GM12878 (cell line): ENCODE measurements at regions of chr1 and their contacts with region 1.

Region 1: DNA sequence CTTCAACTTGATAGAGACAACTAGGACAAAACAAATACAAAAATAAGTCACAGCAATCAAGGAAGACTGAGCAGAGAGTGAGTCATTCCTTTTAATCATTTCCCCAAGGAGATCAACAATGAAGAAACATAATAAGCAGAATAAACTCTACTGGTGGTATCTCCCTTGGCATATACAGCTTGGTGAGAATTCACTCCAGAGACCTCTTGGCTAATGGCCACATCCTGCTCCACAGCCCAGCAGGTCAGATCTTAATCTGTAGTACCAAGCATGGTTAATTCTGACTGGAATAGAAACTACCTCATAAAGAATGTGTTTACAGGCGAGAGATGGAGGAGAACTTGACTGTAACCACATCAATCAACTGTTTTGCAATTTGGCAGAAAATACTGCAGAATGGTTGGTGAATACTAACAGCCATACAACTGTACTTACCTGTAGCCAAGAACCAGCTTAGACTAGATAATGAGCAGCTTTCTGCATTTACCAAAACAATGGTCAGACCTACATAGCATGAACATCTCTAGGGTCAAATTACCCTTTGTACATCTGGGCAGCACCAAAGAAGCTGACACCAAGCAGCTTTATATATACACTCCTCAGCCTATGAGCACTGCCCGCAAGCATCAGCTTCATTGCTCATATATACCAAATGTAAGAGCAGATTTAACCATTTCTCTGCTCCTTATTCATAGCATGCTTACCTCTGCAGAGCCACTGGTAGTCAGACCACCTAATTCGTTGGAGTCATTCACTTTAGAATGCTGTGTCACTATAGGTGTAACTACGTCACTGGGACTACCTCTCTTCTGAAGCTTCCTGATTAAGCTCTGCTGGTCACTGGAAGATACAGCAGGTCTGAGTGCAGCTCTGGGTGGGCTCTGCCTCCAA is 51.0 kb downstream of the KIAA0319L start:
- DNase-seq: peak; percentile 95
- ATAC-seq: peak; percentile 84
- H3K4me3 ChIP-seq: peak overlapping the region; percentile 68; the same call in 1 of the 2 replicates
- H3K27ac ChIP-seq: peak overlapping the region; percentile 94
- H3K4me1 ChIP-seq: peaks cover 40% of the 10 kb centered on the region
- H3K27me3 ChIP-seq: no peaks in the 10 kb centered on the region
- CTCF ChIP-seq: no peak; a peak in 2 of 6 replicates
- EP300 ChIP-seq: peak in 1 of 2 experiments; percentile 62; a peak in 3 of 4 replicates
- POLR2A ChIP-seq: no peak; the same call in 1 of the 2 replicates
- RAD21 ChIP-seq: no peak

Region 2: DNA sequence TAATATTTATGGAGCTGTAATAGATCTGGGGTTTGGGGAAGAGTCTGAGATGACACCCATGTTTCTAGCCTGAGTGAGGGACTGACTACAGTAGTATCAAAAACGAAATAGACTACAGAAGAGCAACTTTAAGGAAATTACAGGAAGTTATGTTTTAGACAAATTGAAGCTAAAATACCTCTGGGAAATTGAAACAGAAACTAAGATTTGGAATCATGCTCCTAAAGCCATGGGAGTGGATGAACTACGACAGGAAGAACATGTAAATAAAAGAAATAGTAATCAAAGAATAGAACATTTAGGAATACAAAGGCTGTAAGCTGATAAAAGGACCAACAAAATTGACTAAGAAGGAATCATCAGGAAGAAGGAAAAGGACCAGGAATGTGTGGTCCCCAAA is 17.8 kb before region 1 on chr1:
- CTCF ChIA-PET with region 1: interaction called, 5 read pairs
- POLR2A ChIA-PET with region 1: interaction called, 5 read pairs
- RAD21 ChIA-PET with region 1: interaction called, 3 read pairs
- SMC1A ChIA-PET with region 1: interaction called, 16 read pairs
- in situ Hi-C with region 1: no loop called
- intact Hi-C with region 1: no loop called
- DNase-seq: no peak
- ATAC-seq: no peak
- H3K4me3 ChIP-seq: no peak overlapping the region
- H3K27ac ChIP-seq: no peak overlapping the region
- H3K4me1 ChIP-seq: 0 out of 2 replicates have a peak, but pooled peaks cover 3% of the 10 kb centered on the region
- H3K27me3 ChIP-seq: no peaks in the 10 kb centered on the region
- CTCF ChIP-seq: no peak
- EP300 ChIP-seq: no peak
- POLR2A ChIP-seq: no peak
- RAD21 ChIP-seq: no peak

Region 3: GRCh38 chr1:35532497-35533223 is 26.5 kb after region 1 on chr1:
- CTCF ChIA-PET with region 1: interaction called, 44 read pairs
- POLR2A ChIA-PET with region 1: interaction called, 65 read pairs
- RAD21 ChIA-PET with region 1: interaction called, 67 read pairs
- SMC1A ChIA-PET with region 1: interaction called, 84 read pairs
- in situ Hi-C with region 1: no loop called
- intact Hi-C with region 1: no loop called
- DNase-seq: no peak
- ATAC-seq: no peak
- H3K4me3 ChIP-seq: no peak overlapping the region
- H3K27ac ChIP-seq: no peak overlapping the region
- H3K4me1 ChIP-seq: 0 out of 2 replicates have a peak, but pooled peaks cover under 1% of the 10 kb centered on the region
- H3K27me3 ChIP-seq: no peaks in the 10 kb centered on the region
- CTCF ChIP-seq: no peak
- EP300 ChIP-seq: no peak
- POLR2A ChIP-seq: no peak
- RAD21 ChIP-seq: no peak

Region 4: GRCh38 chr1:35539073-35539823 is 33.1 kb after region 1 on chr1:
- CTCF ChIA-PET with region 1: interaction called, 44 read pairs
- POLR2A ChIA-PET with region 1: interaction called, 65 read pairs
- RAD21 ChIA-PET with region 1: interaction called, 67 read pairs
- SMC1A ChIA-PET with region 1: interaction called, 84 read pairs
- in situ Hi-C with region 1: no loop called
- intact Hi-C with region 1: loop called (anchors 1 kb)
- DNase-seq: peak; percentile 75
- ATAC-seq: peak; percentile 73
- H3K4me3 ChIP-seq: peak overlapping the region; percentile 39
- H3K27ac ChIP-seq: peak overlapping the region; percentile 87
- H3K4me1 ChIP-seq: peaks cover 27% of the 10 kb centered on the region
- H3K27me3 ChIP-seq: no peaks in the 10 kb centered on the region
- CTCF ChIP-seq: no peak
- EP300 ChIP-seq: no peak
- POLR2A ChIP-seq: peak; percentile 41
- RAD21 ChIP-seq: no peak

Region 5: GRCh38 chr1:35577071-35577998 is 71.2 kb after region 1 on chr1:
- CTCF ChIA-PET with region 1: no interaction called
- POLR2A ChIA-PET with region 1: no interaction called
- RAD21 ChIA-PET with region 1: no interaction called
- SMC1A ChIA-PET with region 1: no interaction called
- in situ Hi-C with region 1: no loop called
- intact Hi-C with region 1: no loop called
- DNase-seq: peak; percentile 40
- ATAC-seq: peak; percentile 92
- H3K4me3 ChIP-seq: peak overlapping the region; percentile 57
- H3K27ac ChIP-seq: peak overlapping the region; percentile 13; the same call in 1 of the 2 replicates
- H3K4me1 ChIP-seq: peaks cover 25% of the 10 kb centered on the region
- H3K27me3 ChIP-seq: peaks cover 0 to 2% of the 10 kb centered on the region in 2 experiments; a peak in 2 of 4 replicates
- CTCF ChIP-seq: no peak
- EP300 ChIP-seq: no peak
- POLR2A ChIP-seq: peak; percentile 78
- RAD21 ChIP-seq: no peak

Region 6: DNA sequence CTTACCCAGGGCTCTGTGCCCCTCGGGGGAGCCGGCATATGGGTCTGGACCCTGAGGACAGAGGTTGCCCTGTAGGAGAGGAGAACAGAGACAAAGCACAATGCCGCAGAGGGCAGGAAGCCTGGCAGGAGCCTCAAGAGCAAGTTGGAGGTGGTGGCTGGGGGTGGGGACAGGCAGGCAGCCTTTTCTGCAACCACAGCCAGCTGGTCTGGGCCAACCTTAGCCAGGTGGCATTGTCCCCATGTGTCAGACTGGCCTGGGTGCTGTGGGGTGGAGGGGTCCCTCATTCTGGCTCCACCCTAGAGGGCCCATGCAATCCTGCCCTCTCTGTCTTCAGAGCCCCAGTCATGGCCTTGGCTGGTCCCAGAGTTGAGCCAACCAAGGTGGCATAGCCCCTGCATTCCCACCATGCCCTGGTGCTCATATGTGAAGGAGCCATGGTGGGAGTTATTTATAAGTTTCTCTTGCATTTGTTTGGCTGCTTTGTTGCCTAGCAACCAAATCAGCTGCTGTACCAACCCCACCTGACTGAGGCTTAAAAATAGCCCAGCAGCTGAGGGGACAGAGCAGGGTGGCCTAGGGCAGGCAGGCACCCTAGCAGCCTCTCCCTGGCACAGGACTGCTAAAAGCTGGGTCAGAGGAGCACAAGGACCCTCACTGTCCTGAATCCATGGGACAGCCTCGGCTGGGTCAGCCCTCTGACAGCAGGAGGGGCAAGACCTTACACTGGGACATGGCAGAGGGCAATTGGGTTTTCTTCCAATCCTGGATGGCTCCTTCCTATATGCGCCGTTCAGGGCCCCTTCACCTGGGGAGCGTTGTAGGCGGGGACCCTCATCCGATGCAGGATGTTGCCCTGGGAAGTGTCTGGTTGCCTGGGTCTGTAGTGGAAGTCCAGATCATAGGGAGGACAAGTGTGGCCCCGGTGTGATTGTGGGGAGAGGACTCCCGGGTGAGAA is 669.3 kb after region 1 on chr1:
- CTCF ChIA-PET with region 1: no interaction called
- POLR2A ChIA-PET with region 1: no interaction called
- RAD21 ChIA-PET with region 1: no interaction called
- SMC1A ChIA-PET with region 1: no interaction called
- in situ Hi-C with region 1: no loop called
- intact Hi-C with region 1: no loop called
- DNase-seq: no peak
- ATAC-seq: peak; percentile 70
- H3K4me3 ChIP-seq: no peak overlapping the region
- H3K27ac ChIP-seq: no peak overlapping the region
- H3K4me1 ChIP-seq: no peaks in the 10 kb centered on the region
- H3K27me3 ChIP-seq: no peaks in the 10 kb centered on the region
- CTCF ChIP-seq: no peak
- EP300 ChIP-seq: no peak
- POLR2A ChIP-seq: no peak
- RAD21 ChIP-seq: no peak